ENCODE measurements at regions of chrX and their contacts with region 1.

Region 1: DNA sequence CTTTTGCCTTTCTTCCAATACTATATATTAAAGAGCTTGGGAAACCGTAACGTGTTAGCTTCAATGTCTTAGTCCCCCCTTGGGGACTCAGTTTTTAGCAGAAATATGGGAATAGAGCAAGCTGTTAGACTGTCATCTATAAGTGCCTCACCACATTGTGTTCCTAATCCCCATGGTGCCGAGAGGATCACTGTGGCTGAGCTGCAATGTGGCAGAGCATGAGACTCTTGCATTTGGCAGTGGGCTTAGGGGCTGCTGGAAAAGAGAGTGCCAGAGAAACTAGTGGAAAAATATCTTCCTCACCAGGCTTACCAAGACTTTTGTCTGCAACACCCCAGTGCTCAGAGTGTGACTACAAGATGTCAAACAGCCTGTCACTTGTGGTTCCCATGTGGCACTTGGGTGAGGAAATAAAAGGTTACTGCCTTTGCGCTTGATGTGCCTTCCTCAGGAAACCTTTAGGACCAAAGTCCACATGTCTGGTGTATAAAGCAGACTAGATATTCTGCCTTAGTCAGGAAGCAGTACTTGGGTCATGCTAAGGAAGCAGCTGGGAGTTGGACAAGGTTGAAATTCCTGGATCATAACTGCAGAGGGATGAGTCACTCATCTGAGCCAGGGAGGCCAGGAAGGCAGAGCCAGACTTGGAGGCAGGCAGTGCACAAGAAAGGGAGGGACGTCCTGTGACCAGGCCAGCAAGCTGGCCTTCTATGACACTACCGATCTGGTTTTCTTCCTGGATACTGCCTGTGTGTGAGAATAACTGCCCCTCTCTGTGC is 9.7 kb upstream of the MAGEA4 start:
- DNase-seq: peak; percentile 91
- H3K4me3 ChIP-seq: no peak overlapping the region
- H3K27ac ChIP-seq: peak overlapping the region; percentile 75
- H3K4me1 ChIP-seq: peaks cover 12% of the 10 kb centered on the region
- H3K27me3 ChIP-seq: no peaks in the 10 kb centered on the region
- CTCF ChIP-seq: no peak
- POLR2A ChIP-seq: no peak

Region 2: DNA sequence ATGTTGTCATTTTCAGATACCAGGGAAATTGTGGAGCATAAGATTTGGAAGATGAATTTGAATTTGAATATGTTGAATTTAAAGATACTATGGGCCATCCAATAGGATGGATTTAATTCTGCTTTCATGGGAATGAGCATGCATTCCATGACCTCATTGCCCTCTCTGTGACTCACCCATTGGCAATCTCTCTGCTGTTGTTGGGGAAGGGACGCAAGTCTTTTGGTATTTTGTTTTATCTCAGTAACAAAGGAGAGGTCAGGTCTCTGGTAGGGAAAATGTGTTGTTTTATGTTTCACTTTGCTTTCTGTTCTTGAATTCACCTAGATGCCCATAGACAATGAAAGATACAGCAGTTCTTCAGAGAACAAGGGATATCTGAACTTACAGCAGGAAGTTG is 32.4 kb before region 1 on chrX:
- CTCF ChIA-PET with region 1: no interaction called
- POLR2A ChIA-PET with region 1: no interaction called
- dilution Hi-C with region 1: no loop called
- intact Hi-C with region 1: loop called (anchors 1 kb)
- DNase-seq: peak; percentile 90
- H3K4me3 ChIP-seq: no peak overlapping the region
- H3K27ac ChIP-seq: peak overlapping the region; percentile 96
- H3K4me1 ChIP-seq: peaks cover 21% of the 10 kb centered on the region
- H3K27me3 ChIP-seq: no peaks in the 10 kb centered on the region
- CTCF ChIP-seq: no peak
- POLR2A ChIP-seq: no peak

Region 3: DNA sequence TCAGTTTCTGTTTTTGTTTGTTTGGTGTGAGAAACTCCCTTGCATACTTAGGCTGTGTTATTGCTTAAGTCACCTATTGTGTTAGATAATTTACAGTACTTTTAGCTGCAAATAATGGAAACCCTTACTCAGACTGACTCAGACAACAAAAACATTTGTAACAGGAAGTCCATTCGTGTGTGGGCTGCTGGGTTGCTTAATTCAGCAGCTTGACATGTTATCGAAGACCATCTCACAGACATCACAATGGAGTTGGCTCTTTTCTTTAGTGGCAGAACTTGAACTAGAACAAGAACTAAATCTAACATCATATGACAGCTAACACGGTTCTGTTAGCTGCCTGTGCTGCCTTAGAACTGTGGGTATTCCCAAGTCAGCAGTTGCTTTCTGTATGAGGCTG is 81.3 kb after region 1 on chrX:
- CTCF ChIA-PET with region 1: no interaction called
- POLR2A ChIA-PET with region 1: no interaction called
- dilution Hi-C with region 1: no loop called
- intact Hi-C with region 1: loop called (anchors 1 kb)
- DNase-seq: peak; percentile 94
- H3K4me3 ChIP-seq: no peak overlapping the region
- H3K27ac ChIP-seq: peak overlapping the region; percentile 99
- H3K4me1 ChIP-seq: peaks cover 56% of the 10 kb centered on the region
- H3K27me3 ChIP-seq: no peaks in the 10 kb centered on the region
- CTCF ChIP-seq: no peak
- POLR2A ChIP-seq: no peak

Measured in endothelial cell of umbilical vein (primary cell).